K562 (cell line): ENCODE measurements at regions of chr15 and their contacts with region 1.

Region 1: GRCh38 chr15:44286814-44287452 is 1.6 kb upstream of the GOLM2 start:
- DNase-seq: peak in 2 of 4 experiments; percentile 17
- ATAC-seq: no peak
- H3K4me3 ChIP-seq: peak overlapping the region; percentile 87; the same call in 1 of the 2 replicates
- H3K27ac ChIP-seq: no peak overlapping the region
- H3K4me1 ChIP-seq: peaks cover 6% of the 10 kb centered on the region in 2 experiments
- H3K27me3 ChIP-seq: no peaks in the 10 kb centered on the region
- CTCF ChIP-seq: no peak
- EP300 ChIP-seq: no peak
- POLR2A ChIP-seq: no peak
- RAD21 ChIP-seq: no peak

Region 2: GRCh38 chr15:44265757-44266156 is 21.2 kb before region 1 on chr15:
- CTCF ChIA-PET with region 1: no interaction called
- POLR2A ChIA-PET with region 1: interaction called, 12 read pairs
- in situ Hi-C with region 1: no loop called
- intact Hi-C with region 1: no loop called
- DNase-seq: no peak
- ATAC-seq: peak; percentile 57; the same call in 2 of the 3 replicates
- H3K4me3 ChIP-seq: no peak overlapping the region
- H3K27ac ChIP-seq: no peak overlapping the region
- H3K4me1 ChIP-seq: no peaks in the 10 kb centered on the region
- H3K27me3 ChIP-seq: peaks cover 6% of the 10 kb centered on the region in 2 experiments; a peak in 2 of 5 replicates
- CTCF ChIP-seq: peak in 1 of 3 experiments; percentile 42; a peak in 2 of 6 replicates
- EP300 ChIP-seq: no peak
- POLR2A ChIP-seq: no peak
- RAD21 ChIP-seq: no peak; a peak in 1 of 4 replicates

Region 3: DNA sequence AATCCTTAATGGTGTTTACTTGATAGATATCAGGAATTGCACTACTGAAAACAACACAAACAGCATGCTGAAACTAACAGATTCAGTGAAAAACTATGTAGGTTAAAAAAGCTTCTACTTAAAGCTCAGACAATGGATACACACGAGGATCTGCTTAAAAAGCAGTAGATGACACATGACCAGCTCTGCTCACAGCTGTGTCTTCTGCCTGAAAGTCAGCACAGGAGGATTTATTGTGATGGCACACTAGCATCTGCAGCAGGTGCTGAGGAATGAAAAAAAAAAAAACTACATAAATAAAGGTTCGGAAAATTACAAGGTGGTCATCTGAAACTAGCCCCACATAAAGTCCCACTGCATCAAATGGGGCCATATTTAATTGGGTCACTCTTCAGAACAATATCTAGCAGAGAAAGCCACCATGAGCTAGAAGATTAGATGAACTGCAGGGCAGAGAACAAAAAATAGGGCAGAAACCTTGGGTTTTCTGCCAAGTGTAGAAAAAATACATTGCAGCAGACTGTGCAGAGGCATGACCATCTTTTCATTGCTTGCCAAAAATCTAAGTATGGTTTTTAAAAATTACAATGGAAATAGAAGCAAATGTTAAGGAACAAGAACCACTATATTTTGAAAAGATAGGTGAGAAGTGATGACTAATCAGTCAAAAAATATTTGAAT is 11.6 kb before region 1 on chr15:
- CTCF ChIA-PET with region 1: no interaction called
- POLR2A ChIA-PET with region 1: interaction called, 12 read pairs
- in situ Hi-C with region 1: no loop called
- intact Hi-C with region 1: no loop called
- DNase-seq: no peak
- ATAC-seq: no peak
- H3K4me3 ChIP-seq: no peak overlapping the region
- H3K27ac ChIP-seq: no peak overlapping the region
- H3K4me1 ChIP-seq: no peaks in the 10 kb centered on the region
- H3K27me3 ChIP-seq: peaks cover 6% of the 10 kb centered on the region in 2 experiments; a peak in 3 of 5 replicates
- CTCF ChIP-seq: no peak
- EP300 ChIP-seq: no peak
- POLR2A ChIP-seq: no peak
- RAD21 ChIP-seq: no peak